Mammary epithelial cell (primary cell): ENCODE measurements at regions of chr4 and their contacts with region 1.

Region 1: DNA sequence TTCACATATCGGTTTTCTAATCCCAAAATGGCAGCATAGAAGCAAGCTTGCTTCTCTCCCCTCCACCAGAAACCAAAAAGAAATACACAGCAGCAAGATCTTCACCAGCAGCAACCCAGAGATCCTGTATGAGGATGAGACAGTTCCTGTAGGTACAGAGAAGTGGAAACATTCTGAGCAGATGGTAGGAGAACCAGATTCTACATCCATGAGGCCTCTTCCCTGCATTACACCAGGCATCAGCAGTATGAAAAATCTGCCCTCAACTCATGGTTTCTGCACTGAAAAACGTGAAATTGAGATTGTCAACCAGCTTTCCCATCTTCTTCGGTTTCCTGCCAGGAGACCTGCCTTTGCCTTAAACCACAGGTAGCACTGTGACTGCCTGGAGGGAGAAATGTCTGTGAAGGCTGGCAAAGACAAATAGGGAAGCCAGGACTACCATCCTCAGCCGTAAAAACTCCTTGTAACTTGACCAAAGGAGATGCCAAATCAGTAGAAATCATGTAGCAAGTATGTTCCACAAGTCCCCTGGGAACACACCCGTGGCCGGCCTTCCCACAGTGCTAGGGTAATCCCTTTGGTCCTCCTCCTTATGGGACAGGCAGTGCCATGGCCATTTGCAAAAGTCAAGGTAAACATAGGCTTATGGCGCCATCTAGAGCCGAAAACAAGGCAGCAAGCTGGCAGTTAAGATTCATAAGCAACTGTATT is 24.0 kb upstream of the MTHFD2L start:
- DNase-seq: peak; percentile 76
- H3K4me3 ChIP-seq: no peak overlapping the region
- H3K27ac ChIP-seq: peak overlapping the region; percentile 30
- H3K4me1 ChIP-seq: peaks cover 7% of the 10 kb centered on the region
- H3K27me3 ChIP-seq: no peaks in the 10 kb centered on the region
- CTCF ChIP-seq: peak; percentile 83 to 89

Region 2: GRCh38 chr4:73593631-73594241 is 540.2 kb before region 1 on chr4:
- CTCF ChIA-PET with region 1: no interaction called
- dilution Hi-C with region 1: loop called (anchors 25 kb)
- in situ Hi-C with region 1: no loop called
- intact Hi-C with region 1: loop called (anchors 10 kb)
- DNase-seq: no peak
- H3K4me3 ChIP-seq: no peak overlapping the region
- H3K27ac ChIP-seq: no peak overlapping the region
- H3K4me1 ChIP-seq: peaks cover 26% of the 10 kb centered on the region
- H3K27me3 ChIP-seq: no peaks in the 10 kb centered on the region
- CTCF ChIP-seq: peak; percentile 51 to 62

Region 3: DNA sequence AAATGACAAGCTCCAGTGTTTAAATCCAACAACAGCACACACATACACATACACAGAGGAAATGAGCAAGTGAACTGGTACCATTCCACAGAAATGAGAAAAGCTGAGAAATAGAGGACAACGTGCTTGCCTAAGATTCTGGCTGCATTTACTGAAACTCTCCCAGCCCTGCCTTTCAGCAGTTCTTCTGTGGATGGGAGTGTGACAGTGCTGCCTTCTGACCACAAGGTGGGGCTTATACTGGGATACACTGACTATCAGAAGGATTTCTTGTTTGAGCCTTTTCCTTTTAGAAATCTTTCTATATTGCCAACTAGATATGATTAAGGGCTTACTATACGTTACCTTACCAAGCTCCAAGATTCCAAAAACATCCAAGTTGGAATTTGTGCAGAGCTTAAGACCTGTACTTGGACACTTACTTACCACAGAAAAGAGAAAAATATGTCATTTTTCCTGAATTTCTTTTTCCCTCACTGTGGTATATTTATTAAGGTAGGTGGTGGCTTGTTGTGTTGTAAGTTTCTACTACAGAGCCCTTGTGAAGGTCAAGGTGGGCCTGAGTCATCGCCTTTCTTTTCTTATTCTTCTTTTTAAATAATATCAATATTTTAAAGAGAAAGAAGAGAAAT is 404.3 kb before region 1 on chr4:
- CTCF ChIA-PET with region 1: no interaction called
- dilution Hi-C with region 1: no loop called
- in situ Hi-C with region 1: no loop called
- intact Hi-C with region 1: loop called (anchors 1 kb)
- DNase-seq: peak; percentile 84
- H3K4me3 ChIP-seq: no peak overlapping the region
- H3K27ac ChIP-seq: no peak overlapping the region
- H3K4me1 ChIP-seq: peaks cover 35% of the 10 kb centered on the region
- H3K27me3 ChIP-seq: no peaks in the 10 kb centered on the region
- CTCF ChIP-seq: peak; percentile 88 to 96

Region 4: DNA sequence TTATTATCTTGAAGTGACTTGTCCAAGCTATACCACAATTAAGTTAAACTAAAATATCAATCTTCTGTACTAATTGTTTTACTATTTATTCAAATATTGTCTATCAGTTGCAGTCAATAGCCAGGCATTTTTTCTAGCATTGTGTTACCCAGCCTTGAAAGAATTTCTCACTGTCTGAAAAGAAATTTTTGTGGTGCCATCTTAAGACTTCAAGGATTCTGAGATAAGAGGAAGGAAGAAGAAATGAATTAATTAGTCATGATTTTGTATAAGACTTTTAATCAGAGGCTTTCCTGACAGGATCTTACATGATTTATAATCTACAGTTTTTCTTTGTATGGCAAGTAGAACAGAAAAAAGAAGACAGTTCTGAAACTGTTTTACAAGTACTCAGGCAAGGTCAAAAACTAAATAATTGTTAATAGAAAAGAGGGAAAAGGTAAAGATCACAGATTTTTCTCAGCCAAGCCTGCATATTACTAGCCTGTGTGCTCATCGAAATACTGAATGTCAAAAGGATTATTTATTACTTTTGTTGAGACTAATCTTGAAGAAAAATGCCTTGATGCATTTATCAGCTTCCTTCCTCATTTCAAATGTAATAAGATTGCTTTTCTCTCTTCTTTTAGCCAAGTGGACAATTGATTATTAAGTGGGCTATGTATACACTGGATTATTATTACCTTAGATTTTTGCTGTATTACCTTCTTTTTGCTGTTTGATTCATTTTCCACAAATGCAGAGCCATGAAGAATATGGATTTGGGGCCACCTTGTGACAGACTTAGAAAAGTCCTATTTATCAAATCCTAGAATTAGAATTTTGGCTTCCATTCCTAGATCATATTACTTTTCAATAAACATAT is 210.9 kb before region 1 on chr4:
- CTCF ChIA-PET with region 1: no interaction called
- dilution Hi-C with region 1: no loop called
- in situ Hi-C with region 1: no loop called
- intact Hi-C with region 1: loop called (anchors 1 kb)
- DNase-seq: peak; percentile 33
- H3K4me3 ChIP-seq: no peak overlapping the region
- H3K27ac ChIP-seq: peak overlapping the region; percentile 3
- H3K4me1 ChIP-seq: peaks cover 10% of the 10 kb centered on the region
- H3K27me3 ChIP-seq: no peaks in the 10 kb centered on the region
- CTCF ChIP-seq: peak; percentile 35 to 53

Region 5: DNA sequence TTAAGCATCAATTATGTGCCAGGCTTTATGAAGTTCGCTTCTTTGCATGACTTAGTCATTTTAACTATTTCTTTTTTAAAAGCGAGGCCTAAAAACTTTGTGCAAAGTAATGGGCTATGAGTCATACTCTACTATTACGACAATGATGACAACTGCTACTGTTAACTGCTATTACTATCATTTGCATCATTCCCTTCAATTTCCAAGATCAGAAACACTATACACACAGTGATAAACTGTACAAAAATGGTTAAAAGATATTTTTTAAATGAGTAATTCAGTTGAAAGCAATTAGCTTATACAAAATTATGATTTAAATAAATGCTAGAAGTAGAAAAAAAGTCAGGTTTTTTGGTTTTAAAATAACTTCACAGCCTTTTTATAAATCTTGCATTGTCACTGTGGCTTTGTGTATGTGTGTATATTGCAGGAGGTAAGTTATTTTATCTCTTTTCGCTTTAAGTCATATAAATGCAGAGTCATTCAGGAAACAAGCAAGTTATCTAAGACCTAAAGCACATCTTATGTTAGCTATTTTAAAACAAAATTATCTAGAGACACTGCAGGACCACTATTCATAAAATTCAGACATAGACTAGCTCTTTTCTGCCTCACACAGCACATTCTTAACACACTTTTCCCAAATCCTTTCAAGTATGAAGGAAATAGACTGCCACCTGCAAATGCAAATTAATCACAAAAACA is 76.9 kb before region 1 on chr4:
- CTCF ChIA-PET with region 1: no interaction called
- dilution Hi-C with region 1: no loop called
- in situ Hi-C with region 1: no loop called
- intact Hi-C with region 1: loop called (anchors 1 kb)
- DNase-seq: peak; percentile 62
- H3K4me3 ChIP-seq: no peak overlapping the region
- H3K27ac ChIP-seq: peak overlapping the region; percentile 69
- H3K4me1 ChIP-seq: peaks cover 3% of the 10 kb centered on the region
- H3K27me3 ChIP-seq: no peaks in the 10 kb centered on the region
- CTCF ChIP-seq: no peak

Region 6: DNA sequence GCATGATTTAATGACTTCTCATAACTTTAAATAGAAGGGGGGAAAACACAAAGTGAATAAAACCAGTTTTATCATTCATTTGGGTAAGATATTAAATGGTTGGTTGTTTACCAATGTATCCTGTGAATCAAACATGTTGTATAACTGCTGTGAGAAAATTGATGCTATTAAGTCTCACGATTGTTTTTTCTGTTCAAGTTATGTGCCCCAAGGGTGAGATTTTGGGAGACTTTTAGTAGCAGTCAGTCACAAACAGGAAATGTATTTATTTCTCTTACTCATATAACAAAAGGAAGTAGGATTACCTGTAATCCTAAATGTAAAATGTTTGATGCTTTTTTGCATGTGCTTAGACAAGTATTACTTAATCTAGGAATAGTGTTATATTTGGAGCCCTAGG is 63.1 kb after region 1 on chr4:
- CTCF ChIA-PET with region 1: no interaction called
- dilution Hi-C with region 1: no loop called
- in situ Hi-C with region 1: no loop called
- intact Hi-C with region 1: no loop called
- DNase-seq: no peak
- H3K4me3 ChIP-seq: no peak overlapping the region
- H3K27ac ChIP-seq: no peak overlapping the region
- H3K4me1 ChIP-seq: no peaks in the 10 kb centered on the region
- H3K27me3 ChIP-seq: no peaks in the 10 kb centered on the region
- CTCF ChIP-seq: no peak

Region 7: GRCh38 chr4:74583077-74583693 is 449.2 kb after region 1 on chr4:
- CTCF ChIA-PET with region 1: no interaction called
- dilution Hi-C with region 1: no loop called
- in situ Hi-C with region 1: no loop called
- intact Hi-C with region 1: no loop called
- DNase-seq: peak; percentile 21
- H3K4me3 ChIP-seq: no peak overlapping the region
- H3K27ac ChIP-seq: no peak overlapping the region
- H3K4me1 ChIP-seq: peaks cover 13% of the 10 kb centered on the region
- H3K27me3 ChIP-seq: no peaks in the 10 kb centered on the region
- CTCF ChIP-seq: no peak